Left cardiac atrium (tissue), 4 donors: ENCODE measurements at regions of chr17 and their contacts with region 1.

Region 1: GRCh38 chr17:794876-795275 is 12.7 kb downstream of the MRM3 start:
- DNase-seq: peak; percentile 91
- ATAC-seq: peak; percentile 61 to 69

Region 2: DNA sequence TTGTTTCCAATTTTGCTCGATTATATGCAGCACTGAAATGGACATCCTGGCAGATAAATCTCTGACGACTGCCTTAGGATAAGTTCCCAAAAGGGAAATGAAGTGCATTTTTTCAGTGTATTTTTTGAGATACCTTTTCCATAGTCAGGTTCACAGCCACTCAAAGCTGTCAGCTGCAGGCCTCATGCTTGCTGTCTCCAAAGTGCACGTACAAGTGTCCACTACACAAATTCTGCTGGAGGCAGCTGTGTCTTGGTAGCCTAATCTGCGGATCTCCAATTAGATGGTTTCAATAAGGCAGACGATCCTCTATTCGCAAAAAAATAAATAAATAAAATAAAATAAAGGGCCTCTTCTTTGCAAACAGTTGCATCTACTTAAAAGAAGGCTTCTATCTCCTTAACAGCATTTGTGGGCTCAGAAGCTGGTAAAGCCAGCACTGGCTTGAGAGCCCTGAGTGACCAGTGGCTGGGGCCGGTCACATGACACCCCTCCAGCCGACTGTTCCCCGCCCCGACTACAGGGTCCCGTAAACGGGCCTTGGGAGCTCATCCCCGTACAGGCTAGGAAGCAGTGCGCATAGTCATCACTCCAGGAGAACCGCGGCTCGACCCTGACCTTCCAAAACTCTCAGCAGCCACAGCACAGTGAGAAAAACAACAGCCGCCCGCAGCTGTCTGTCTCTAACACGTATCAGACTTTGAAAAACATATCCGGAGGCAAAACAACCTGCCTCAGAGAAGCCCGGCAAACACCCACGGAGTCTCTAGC is 461.1 kb before region 1 on chr17:
- intact Hi-C with region 1: no loop called
- DNase-seq: peak; percentile 87
- ATAC-seq: peak; percentile 86 to 89

Region 3: GRCh38 chr17:846901-847843 is 52.3 kb after region 1 on chr17:
- intact Hi-C with region 1: loop called in 1 of 2 experiments (anchors 10 kb)
- DNase-seq: no peak
- ATAC-seq: peak; percentile 12 to 44

Region 4: DNA sequence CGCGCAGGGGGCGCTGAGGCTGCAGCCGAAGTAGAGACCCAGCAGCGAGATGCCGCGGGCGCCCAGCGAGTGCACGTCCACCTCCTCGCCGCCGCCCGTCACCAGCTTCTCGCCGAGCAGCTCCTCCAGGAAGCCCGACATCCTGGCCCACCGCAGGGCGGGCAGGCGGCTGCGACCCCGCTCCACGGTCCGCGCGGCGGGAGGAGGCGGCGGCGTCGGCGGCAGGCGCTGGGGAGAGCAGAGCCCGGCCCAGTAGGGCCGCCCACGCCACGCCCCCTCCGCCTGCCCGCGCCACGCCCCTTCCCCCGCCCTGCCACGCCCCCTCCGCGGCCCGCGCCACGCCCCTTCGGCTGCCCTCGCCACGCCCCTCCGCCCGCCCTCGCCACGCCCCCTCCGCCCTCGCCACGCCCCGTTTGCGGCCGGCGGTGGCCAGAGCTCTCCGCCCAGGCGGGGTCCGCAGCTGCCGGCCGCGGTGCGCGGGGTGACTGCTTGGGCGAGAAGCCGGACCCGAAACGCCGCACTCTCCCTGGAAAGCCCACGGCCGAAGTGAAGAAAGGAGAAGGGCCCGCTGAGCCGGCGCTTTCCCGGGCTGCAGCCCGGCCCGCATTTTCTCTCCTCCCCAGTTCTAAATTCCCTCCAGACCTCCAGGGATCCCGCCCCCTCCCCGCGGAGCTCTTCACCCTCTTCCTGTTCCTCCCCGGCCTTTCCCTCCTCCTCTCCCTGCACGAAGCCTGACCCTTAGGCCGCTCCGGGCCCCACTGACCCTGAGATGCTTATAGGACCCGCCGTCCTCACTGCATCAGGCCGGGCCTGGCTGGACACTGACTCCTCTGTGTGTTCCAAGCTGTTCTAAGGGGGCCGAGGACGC is 184.9 kb after region 1 on chr17 and contains the start of gene NXN:
- intact Hi-C with region 1: loop called (anchors 2 to 5 kb)
- DNase-seq: peak; percentile 88
- ATAC-seq: peak; percentile 95 to 98
- total RNA-seq, gene NXN: 16.7 to 20.8 TPM

Region 5: GRCh38 chr17:1055751-1056645 is 261.1 kb after region 1 on chr17:
- intact Hi-C with region 1: loop called in 1 of 2 experiments (anchors 5 kb)
- DNase-seq: peak; percentile 67
- ATAC-seq: peak; percentile 69 to 83